Activated CD4-positive, alpha-beta T cell treated with anti-CD3 and anti-CD28 coated beads, Interleukin-2, amount 10 ng/mL, durations not matched to agents 7 days and 5 days (primary cell): ENCODE measurements at regions of chr12 and their contacts with region 1.

Region 1: DNA sequence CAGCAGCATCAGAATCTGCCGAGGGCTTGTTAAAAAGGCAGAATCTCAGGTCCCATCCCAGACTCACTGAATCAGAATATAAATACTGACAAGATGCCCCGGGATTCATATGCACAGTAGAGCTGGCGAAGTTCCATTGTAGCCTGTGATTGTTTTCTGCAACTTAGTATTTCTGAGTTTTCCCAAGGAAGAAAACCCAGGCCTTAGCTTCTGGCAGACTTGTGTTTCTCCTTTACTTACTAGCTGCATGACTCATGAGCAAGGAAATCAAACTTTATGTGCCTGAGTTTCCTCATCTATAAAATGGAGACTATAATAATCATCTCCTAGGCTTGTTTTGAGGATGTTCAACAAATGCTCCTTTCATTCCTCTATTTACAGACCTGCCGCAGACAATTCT is 278.5 kb upstream of the PLEKHG7 start:
- DNase-seq: no peak
- H3K4me3 Mint-ChIP-seq: no peak overlapping the region
- H3K27ac Mint-ChIP-seq: no peak overlapping the region
- H3K4me1 Mint-ChIP-seq: peaks cover 15% of the 10 kb centered on the region
- H3K27me3 Mint-ChIP-seq: no peaks in the 10 kb centered on the region

Region 2: DNA sequence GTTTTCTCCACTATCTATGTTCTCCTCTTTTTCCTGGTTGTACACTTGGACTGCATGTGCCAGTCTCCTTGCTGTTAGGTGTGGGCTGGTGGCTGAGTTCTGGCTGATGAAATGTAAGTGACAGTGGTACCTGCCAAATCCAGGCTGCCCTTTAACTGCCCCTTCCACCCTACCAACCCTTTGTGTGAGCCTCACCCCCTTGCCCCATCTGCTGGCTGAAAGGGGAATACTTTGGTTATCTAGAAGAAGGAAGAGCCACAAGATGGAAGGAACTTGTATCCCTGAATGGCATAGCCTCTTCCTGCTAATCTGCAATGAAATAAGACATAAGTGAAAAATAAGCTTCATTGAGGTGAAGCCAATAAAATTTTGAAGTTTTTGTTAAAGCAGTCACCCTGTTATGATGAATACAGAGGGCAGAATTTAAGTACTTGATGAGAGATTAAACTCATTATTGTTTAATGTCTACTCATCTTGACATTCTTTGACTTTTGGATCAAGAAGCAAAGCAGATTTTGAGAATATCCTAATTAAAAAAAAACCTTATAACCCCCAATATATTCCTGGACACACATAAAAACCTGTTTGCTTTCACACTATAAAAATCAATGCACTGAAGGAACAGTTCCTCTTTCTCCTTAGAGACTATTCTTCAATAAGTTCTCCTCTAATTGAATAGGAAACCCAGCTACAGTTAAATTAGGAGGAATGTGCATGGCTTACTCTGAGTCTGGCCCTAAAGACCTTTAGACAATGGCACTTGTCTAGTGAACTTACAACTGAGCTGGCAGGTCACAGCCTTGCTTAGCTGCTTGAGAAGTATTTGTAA is 16.1 kb before region 1 on chr12:
- CTCF ChIA-PET with region 1: interaction called, 11 read pairs
- POLR2A ChIA-PET with region 1: no interaction called
- DNase-seq: peak; percentile 59
- H3K4me3 Mint-ChIP-seq: no peak overlapping the region
- H3K27ac Mint-ChIP-seq: no peak overlapping the region
- H3K4me1 Mint-ChIP-seq: peaks cover 43% of the 10 kb centered on the region
- H3K27me3 Mint-ChIP-seq: no peaks in the 10 kb centered on the region